ENCODE measurements at regions of chr14 and their contacts with region 1.

Region 1: DNA sequence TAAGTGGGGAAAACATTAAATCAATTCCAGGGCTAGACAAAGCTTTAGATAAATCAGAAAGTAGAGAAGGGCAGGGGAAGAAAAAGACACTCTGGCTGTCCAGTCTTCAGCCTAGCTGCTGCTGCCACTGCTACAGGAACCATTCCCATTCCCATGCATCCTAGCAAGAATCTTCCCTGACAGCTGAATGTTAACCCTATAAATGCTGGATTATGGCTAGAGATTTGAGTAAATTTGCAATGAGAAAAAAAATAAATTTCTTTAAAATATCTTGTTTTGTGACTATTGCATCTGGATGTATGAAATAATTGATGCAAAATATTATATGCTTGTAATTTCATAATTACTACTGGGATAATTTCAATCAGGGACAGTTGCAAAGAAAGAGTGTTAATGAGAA is 15.0 kb upstream of the CDKN3 start:
- DNase-seq: no peak
- H3K4me3 ChIP-seq: no peak overlapping the region
- H3K27ac ChIP-seq: no peak overlapping the region
- H3K4me1 ChIP-seq: 0 out of 7 replicates have a peak, but pooled peaks cover 0 to 4% (median 0%) of the 10 kb centered on the region in 4 experiments
- H3K27me3 ChIP-seq: no peaks in the 10 kb centered on the region
- CTCF ChIP-seq: no peak
- EP300 ChIP-seq: no peak
- POLR2A ChIP-seq: no peak
- RAD21 ChIP-seq: no peak

Region 2: GRCh38 chr14:54396493-54397335 is 14.9 kb after region 1 on chr14 and contains the start of gene CDKN3:
- CTCF ChIA-PET with region 1: interaction called, 7 read pairs
- POLR2A ChIA-PET with region 1: interaction called, 15 read pairs
- DNase-seq: peak; percentile 94 to 97
- H3K4me3 ChIP-seq: peak within 1 kb of the TSS; percentile 64 to 84 (median 79)
- H3K27ac ChIP-seq: peak within 1 kb of the TSS; percentile 41; the same call in 1 of the 2 replicates
- H3K4me1 ChIP-seq: peaks cover 0 to 3% (median 1%) of the 10 kb centered on the region in 4 experiments; a peak in 2 of 7 replicates
- H3K27me3 ChIP-seq: peaks cover 0 to 7% (median 3%) of the 10 kb centered on the region in 4 experiments; a peak in 3 of 7 replicates
- CTCF ChIP-seq: peak; percentile 12 to 31 (median 24); a peak in 3 of 4 replicates
- EP300 ChIP-seq: no peak
- POLR2A ChIP-seq: peak; percentile 85 to 88
- RAD21 ChIP-seq: 0 out of 4 replicates have a peak, but pooled peaks of 1 of the 2 experiments have one; percentile 1
- total RNA-seq, gene CDKN3: 41.5 and 48.3 TPM in 2 replicates

Region 3: GRCh38 chr14:54866588-54866987 is 484.8 kb after region 1 on chr14:
- CTCF ChIA-PET with region 1: no interaction called
- POLR2A ChIA-PET with region 1: no interaction called
- DNase-seq: no peak
- H3K4me3 ChIP-seq: no peak overlapping the region
- H3K27ac ChIP-seq: no peak overlapping the region
- H3K4me1 ChIP-seq: peaks cover 0 to 4% (median 0%) of the 10 kb centered on the region in 4 experiments; a peak in 2 of 7 replicates
- H3K27me3 ChIP-seq: no peaks in the 10 kb centered on the region
- CTCF ChIP-seq: no peak
- EP300 ChIP-seq: no peak
- POLR2A ChIP-seq: no peak
- RAD21 ChIP-seq: no peak